ENCODE measurements at regions of chr22 and their contacts with region 1.

Region 1: DNA sequence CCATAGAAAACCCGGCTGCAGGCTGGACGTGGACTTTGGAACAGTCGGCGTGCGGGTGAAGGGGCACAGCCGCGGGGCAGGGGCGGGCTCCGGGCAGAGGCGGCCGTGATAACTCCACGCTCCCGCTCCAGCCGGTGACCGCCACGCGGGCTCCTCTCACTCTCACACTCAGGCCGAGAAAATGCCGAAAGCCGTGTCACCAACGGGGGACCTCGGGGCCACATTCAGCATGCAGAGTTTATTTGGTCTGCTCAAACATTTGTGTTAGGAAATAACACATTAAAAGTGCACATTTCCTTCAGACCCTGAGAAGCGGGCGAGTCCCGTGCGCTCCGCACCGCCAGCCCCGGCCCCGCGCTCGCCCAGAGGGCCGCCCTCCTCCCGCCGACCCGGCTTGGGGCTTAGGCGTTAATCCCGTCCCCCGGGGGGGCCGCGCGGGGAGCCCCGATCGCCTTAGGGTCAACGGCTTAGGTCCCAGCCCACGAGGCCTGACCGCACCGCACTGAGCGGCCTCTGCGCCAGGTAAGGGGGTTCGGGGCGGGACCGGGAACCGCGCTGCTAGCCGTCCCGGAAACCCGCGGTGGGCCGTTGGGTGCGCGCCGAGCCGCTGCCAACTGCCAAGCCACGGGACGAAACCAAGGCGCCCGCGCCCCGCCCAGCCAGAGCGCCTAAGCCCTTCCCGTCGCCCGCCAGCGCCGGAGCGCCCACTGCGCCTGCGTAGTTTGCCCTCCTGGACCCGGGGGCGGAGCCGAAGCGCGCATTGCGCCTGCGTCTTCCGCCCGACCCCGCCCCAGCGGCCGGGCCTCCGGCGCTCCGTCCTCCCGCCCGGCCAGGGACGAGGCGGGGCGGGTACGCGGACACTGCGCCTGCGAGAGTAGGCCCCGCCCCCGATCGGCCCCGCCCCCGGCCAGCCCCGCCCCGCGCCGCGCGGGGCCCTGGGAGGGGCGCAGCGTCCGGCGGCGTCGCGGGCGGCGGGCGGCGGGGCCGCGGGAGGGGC is at the start of gene ZBED4:
- DNase-seq: peak; percentile 100
- ATAC-seq: peak; percentile 88
- H3K4me3 Mint-ChIP-seq: peak within 1 kb of the TSS; percentile 93
- H3K27ac Mint-ChIP-seq: peak within 1 kb of the TSS; percentile 89
- H3K4me1 Mint-ChIP-seq: peaks cover 36% of the 10 kb centered on the region
- H3K27me3 Mint-ChIP-seq: peaks cover 16% of the 10 kb centered on the region
- CTCF ChIP-seq: no peak
- total RNA-seq, gene ZBED4: 16.0 and 17.3 TPM in 2 replicates

Region 2: DNA sequence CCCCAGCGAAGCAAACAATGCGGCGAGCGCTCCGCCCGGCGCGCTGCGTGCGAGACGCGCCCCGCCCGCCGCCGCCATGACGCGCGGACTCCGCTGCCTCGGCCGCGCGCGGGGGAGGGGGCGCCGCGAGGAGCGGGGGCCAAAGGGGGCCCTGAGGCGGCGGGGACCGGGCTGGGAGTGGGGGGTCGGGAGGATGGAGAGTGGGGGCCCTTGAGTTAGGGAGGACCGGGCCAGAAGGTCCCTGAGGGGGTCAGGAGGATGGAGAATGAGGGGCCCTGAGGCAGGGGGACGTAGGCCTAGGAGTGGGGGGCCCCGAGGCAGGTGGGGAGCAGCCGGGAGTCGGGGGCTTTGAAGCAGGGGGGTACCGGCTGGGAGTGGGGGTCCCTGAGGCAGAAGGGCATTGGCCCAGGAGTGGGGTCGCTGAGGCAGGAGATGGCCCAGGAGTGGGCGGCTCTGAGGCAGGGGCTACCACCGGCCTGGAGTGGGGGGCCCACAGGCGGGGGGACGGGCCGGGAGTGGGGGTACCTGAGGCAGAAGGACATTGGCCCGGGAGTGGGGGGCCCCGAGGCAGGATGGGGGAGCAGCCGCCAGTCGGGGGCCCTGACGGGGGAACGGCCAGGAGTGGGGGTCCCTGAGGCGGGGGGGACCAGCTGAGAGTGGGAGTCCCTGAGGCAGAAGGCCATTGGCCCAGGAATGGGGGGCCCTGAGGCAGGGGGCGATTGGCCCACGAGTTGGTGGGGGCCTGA is 25.2 kb before region 1 on chr22 and contains the start of gene BRD1:
- CTCF ChIA-PET with region 1: no interaction called
- POLR2A ChIA-PET with region 1: interaction called, 7 read pairs
- intact Hi-C with region 1: loop called (anchors 1 kb)
- DNase-seq: peak; percentile 66
- ATAC-seq: peak; percentile 78
- H3K4me3 Mint-ChIP-seq: peak within 1 kb of the TSS; percentile 84
- H3K27ac Mint-ChIP-seq: peak within 1 kb of the TSS; percentile 63
- H3K4me1 Mint-ChIP-seq: peaks cover 47% of the 10 kb centered on the region
- H3K27me3 Mint-ChIP-seq: peaks cover 4% of the 10 kb centered on the region
- CTCF ChIP-seq: no peak
- total RNA-seq, gene BRD1: 37.5 and 45.8 TPM in 2 replicates

Region 3: DNA sequence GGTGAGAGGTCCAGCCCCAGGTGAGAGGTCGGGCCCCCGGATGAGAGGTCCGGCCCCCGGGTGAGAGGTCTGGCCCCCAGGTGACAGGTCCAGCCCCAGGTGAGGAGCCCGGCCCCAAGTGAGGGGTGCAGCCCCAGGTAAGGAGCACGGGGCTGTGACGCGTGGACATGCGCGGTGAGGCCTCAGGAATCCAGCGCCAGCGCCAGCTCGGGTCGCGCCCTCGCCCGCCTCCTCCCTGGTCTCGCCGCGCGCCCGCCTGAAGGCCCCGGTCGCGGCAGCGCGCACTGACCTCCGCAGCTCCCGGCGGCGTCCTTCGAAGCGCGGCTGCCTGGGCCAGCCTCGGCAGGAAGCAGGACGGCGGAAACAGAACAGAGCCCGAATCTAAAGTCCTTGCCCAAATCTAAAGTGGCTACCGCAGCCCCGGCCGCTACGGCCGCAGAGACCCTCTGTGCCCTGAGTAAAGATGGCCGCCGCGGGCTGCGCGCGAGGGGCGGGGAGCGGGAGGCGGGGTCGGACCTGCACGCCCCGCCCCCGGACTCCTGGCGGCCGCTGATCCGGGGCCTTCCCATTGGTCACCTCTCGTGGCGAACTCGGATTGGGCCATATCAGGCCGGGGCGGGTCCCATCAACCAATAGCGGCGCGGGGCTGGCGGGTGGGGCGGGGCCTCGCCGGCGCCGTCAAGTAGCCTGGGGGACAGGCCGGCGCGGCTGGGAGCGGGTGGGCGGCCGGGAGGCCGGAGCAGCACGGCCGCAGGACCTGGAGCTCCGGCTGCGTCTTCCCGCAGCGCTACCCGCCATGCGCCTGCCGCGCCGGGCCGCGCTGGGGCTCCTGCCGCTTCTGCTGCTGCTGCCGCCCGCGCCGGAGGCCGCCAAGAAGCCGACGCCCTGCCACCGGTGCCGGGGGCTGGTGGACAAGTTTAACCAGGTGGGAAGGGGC is 65.0 kb after region 1 on chr22 and contains the starts of genes ALG12 and CRELD2:
- CTCF ChIA-PET with region 1: no interaction called
- POLR2A ChIA-PET with region 1: interaction called, 9 read pairs
- intact Hi-C with region 1: loop called (anchors 1 kb)
- DNase-seq: peak; percentile 95
- ATAC-seq: peak; percentile 98
- H3K4me3 Mint-ChIP-seq: peak within 1 kb of the TSS; percentile 84
- H3K27ac Mint-ChIP-seq: peak within 1 kb of the TSS; percentile 80
- H3K4me1 Mint-ChIP-seq: peaks cover 34% of the 10 kb centered on the region
- H3K27me3 Mint-ChIP-seq: no peaks in the 10 kb centered on the region
- CTCF ChIP-seq: no peak
- total RNA-seq, gene ALG12: 15.5 and 18.2 TPM in 2 replicates
- total RNA-seq, gene CRELD2: 44.5 and 45.0 TPM in 2 replicates

Region 4: GRCh38 chr22:50200461-50201190 is 347.4 kb after region 1 on chr22 and contains the start of gene SELENOO:
- CTCF ChIA-PET with region 1: no interaction called
- POLR2A ChIA-PET with region 1: no interaction called
- intact Hi-C with region 1: loop called (anchors 10 kb)
- DNase-seq: peak; percentile 88
- ATAC-seq: peak; percentile 93
- H3K4me3 Mint-ChIP-seq: peak within 1 kb of the TSS; percentile 85
- H3K27ac Mint-ChIP-seq: peak within 1 kb of the TSS; percentile 35
- H3K4me1 Mint-ChIP-seq: peaks cover 26% of the 10 kb centered on the region
- H3K27me3 Mint-ChIP-seq: no peaks in the 10 kb centered on the region
- CTCF ChIP-seq: no peak
- total RNA-seq, gene SELENOO: 33.9 and 39.0 TPM in 2 replicates

Measured in activated B cell treated with CpG ODN at 0.5 μM for 24 hours (primary cell).